ENCODE measurements at regions of chr2 and their contacts with region 1.

Region 1: GRCh38 chr2:241686649-241687425 is at the start of gene DTYMK:
- DNase-seq: peak; percentile 93

Region 2: DNA sequence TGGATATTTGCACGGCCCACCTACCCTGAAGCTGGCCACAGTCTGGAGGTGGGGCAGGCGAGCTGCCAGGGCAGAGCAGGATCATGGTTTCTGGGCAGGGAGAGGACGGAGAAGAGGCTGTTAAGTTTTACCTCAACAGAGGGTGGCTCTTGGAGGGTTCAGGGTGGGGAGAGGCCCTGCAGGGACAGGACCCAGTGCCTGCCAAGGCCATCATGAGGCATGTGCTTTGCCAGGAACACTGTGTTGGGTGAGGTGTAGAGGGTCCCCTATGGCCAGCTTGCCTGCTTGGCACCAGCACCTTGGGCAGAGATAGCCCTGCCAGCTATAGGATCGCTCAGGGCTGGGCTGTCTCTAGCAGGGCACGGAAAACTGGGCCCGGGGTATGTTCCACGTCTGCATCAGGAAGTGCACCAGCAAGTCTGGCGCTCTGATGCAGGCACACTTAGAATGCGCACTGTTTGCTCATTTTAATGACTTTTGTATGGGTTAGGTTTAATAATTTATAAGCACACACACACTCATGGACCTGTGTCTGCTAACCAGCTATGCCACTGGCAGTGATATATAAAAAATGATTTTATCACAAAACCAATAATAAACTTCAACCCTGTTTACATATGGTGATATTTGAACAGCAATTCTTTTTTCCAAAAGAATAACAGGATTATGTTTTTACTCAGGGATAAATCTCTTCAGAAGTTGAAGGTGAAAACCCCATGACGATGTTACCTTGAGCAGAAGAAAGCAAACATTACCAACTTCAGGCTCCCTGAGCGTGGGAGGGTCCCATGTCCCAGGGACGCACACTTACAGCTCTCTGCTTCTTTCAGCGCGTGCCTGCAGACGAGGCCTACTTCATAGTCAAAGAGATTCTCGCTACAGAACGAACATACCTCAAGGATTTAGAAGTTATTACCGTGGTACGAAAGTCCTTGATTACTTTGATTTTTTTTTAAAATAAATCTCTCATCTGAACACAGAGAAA is 224.9 kb before region 1 on chr2:
- CTCF ChIA-PET with region 1: no interaction called
- POLR2A ChIA-PET with region 1: no interaction called
- DNase-seq: no peak

Region 3: DNA sequence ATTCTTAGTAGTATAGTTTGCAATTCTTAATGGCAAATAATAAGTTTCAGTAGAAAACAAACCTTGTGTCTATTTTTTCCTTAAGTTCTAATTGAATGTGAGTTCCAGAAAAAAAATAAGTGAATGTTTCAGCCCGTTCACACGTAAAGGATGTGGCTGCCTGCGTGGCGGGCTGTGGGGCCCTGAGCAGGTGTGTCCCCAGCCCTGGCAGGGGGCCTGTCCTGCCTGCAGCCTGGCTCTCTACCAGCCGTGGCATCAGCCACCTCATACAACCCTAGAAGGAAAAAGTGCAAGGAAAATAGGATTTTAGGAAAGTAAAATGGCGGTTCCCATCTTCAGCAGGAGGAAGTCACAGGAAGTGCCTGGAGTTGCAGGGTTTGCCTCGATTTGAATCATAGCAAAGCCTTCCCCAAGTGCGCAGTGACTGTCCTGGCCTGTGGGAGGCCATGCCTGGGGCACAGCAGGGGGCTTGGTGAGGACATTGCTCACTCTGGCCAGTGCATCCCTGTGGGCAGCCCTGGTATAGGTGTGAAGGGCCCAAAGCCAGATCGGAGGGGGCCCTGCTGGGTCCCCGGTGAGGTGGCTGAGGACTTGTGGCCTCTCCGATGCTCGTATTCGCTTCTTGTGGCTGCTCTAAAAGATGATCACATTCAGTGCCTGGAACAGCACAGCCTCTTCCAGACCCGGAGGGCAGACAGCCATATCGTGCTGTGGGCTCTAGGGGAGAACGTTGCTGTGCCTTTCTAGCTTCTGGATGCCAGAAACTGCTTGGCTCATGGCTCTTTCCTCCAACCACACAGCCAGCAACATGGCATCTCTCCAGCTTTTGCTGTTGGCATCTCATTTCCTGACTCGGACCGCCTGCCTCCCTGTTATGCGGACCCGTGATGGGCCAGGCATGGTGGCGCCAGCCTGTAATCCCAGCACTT is 12.8 kb before region 1 on chr2:
- CTCF ChIA-PET with region 1: interaction called, 4 read pairs
- POLR2A ChIA-PET with region 1: interaction called, 16 read pairs
- DNase-seq: peak; percentile 29

Region 4: DNA sequence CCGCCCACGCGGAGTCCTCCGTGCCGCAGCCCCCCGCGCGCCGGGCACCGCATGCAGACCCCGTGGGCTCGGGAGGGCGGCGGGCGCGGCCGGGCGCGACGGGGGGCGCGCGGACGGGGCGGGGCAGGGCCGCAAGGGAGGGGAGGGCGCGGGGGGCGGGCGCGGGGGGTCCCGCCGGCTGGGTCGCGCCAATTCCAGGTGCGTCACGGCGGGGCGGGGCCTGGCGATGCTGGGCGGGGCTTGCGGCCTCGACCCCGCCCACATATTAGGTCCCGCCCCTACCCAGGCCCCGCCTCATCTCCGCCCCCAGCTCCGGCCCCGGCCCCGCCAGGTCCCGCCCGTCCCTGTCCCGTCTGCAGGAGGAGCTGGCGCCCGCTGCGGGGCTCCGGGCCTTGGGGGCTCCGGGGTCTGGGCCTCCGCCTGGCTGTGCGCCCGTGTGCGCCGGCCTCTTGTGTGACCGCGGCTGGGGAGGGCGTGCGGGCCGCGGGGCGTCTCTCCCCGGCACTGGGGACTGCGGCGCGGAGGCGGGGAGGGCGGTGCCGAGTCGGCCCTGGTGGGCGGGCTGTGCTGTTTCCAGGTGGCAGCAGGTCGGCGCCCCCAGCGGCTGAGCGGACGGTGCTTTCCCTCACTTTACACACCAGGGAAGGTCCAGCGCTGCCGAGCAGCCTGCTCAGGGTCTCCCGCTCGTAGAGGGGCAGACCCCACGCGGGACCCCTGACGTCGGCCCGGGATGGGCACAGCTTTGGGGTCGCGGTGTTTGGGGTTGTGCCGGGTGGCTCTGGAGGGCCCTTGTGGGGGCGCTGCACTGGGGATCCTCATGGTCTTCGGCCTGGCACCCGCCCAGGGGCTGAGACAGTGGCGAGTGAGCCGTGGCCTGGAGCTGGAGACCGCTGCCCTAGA is 15.5 kb after region 1 on chr2:
- CTCF ChIA-PET with region 1: no interaction called
- POLR2A ChIA-PET with region 1: interaction called, 78 read pairs
- DNase-seq: peak; percentile 84

Measured in HEK293T (cell line).